ENCODE measurements at regions of chr15 and their contacts with region 1.

Region 1: GRCh38 chr15:79887054-79887915 is 9.5 kb downstream of the MTHFS start:
- DNase-seq: no peak
- H3K4me3 ChIP-seq: no peak overlapping the region
- H3K27ac ChIP-seq: no peak overlapping the region
- H3K4me1 ChIP-seq: no peaks in the 10 kb centered on the region
- CTCF ChIP-seq: no peak

Region 2: GRCh38 chr15:79689030-79689429 is 198.3 kb before region 1 on chr15:
- CTCF ChIA-PET with region 1: no interaction called
- POLR2A ChIA-PET with region 1: no interaction called
- intact Hi-C with region 1: no loop called
- DNase-seq: no peak
- H3K4me3 ChIP-seq: no peak overlapping the region
- H3K27ac ChIP-seq: no peak overlapping the region
- H3K4me1 ChIP-seq: no peaks in the 10 kb centered on the region
- CTCF ChIP-seq: no peak

Region 3: GRCh38 chr15:79872358-79873017 is 14.8 kb before region 1 on chr15:
- CTCF ChIA-PET with region 1: no interaction called
- POLR2A ChIA-PET with region 1: interaction called, 13 read pairs
- intact Hi-C with region 1: no loop called
- DNase-seq: no peak
- H3K4me3 ChIP-seq: no peak overlapping the region
- H3K27ac ChIP-seq: no peak overlapping the region
- H3K4me1 ChIP-seq: no peaks in the 10 kb centered on the region
- CTCF ChIP-seq: no peak

Region 4: GRCh38 chr15:79923515-79924395 is 36.5 kb after region 1 on chr15:
- CTCF ChIA-PET with region 1: no interaction called
- POLR2A ChIA-PET with region 1: no interaction called
- intact Hi-C with region 1: no loop called
- DNase-seq: peak; percentile 98
- H3K4me3 ChIP-seq: peak overlapping the region; percentile 84
- H3K27ac ChIP-seq: peak overlapping the region; percentile 86
- H3K4me1 ChIP-seq: peaks cover 17% of the 10 kb centered on the region
- CTCF ChIP-seq: no peak